Sigmoid colon (tissue), 7 donors: ENCODE measurements at regions of chr13 and their contacts with region 1.

Region 1: DNA sequence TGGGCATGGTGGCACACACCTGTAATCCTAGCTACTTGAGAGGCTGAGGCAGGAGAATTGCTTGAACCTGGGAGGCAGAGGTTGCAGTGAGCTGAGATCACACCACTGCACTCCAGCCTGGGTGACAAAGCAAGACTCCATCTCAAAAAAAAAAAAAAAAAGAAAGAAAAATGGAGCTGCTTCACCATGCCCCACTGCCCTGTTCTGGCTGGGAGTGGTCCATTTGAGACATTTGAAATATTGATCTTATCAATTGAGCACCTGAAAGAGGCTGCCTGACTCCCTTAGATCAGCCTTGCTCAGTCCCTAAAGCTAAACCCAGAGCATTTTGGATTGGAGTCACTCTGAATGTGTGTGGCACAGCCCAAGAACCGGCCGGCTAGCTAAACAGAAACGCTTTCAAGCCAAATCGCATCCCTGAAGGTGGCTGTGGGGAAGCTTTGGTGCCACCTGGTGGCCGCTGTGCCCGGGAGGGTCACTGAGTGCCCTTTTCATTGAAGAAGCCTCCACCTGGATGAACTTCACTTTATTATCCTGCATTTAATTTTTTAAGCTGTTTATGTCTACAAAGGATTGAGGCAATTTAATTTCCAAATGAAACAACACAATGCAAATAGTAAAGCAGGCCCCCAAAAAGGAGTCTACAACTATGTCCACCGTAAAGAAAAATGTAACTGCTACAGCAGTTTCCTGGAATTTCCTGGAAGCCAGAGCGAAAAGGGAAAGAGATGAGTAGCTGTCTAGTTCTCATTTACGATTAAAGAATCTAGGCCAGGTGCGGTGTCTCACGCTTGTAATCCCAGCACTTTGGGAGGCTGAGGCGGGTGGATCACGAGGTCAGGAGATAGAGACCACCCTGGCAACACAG is 53.1 kb upstream of the SERPINE3 start:
- DNase-seq: peak; percentile 87
- H3K4me3 ChIP-seq: no peak overlapping the region
- H3K27ac ChIP-seq: no peak overlapping the region
- H3K4me1 ChIP-seq: peaks cover 0 to 25% (median 11%) of the 10 kb centered on the region in 4 donors
- H3K27me3 ChIP-seq: no peaks in the 10 kb centered on the region
- CTCF ChIP-seq: peak; percentile 82 to 93 (median 88)
- EP300 ChIP-seq: no peak
- POLR2A ChIP-seq: no peak

Region 2: GRCh38 chr13:51125498-51126226 is 160.7 kb before region 1 on chr13:
- intact Hi-C with region 1: loop called (anchors 2 kb)
- DNase-seq: peak; percentile 72
- H3K4me3 ChIP-seq: no peak overlapping the region
- H3K27ac ChIP-seq: no peak overlapping the region
- H3K4me1 ChIP-seq: no peaks in the 10 kb centered on the region
- H3K27me3 ChIP-seq: no peaks in the 10 kb centered on the region
- CTCF ChIP-seq: peak; percentile 52 to 61 (median 55)
- EP300 ChIP-seq: no peak
- POLR2A ChIP-seq: no peak

Region 3: GRCh38 chr13:51148952-51149573 is 137.3 kb before region 1 on chr13:
- intact Hi-C with region 1: loop called (anchors 1 kb)
- DNase-seq: no peak
- H3K4me3 ChIP-seq: no peak overlapping the region
- H3K27ac ChIP-seq: peak overlapping the region in 1 of 4 donors; percentile 32
- H3K4me1 ChIP-seq: peaks cover 0 to 3% (median 0%) of the 10 kb centered on the region in 4 donors
- H3K27me3 ChIP-seq: no peaks in the 10 kb centered on the region
- CTCF ChIP-seq: peak; percentile 20 to 56 (median 46)
- EP300 ChIP-seq: no peak
- POLR2A ChIP-seq: no peak

Region 4: GRCh38 chr13:51832471-51833152 is 546.2 kb after region 1 on chr13:
- intact Hi-C with region 1: no loop called
- DNase-seq: no peak
- H3K4me3 ChIP-seq: no peak overlapping the region
- H3K27ac ChIP-seq: no peak overlapping the region
- H3K4me1 ChIP-seq: peaks cover 0 to 5% (median 3%) of the 10 kb centered on the region in 4 donors
- H3K27me3 ChIP-seq: no peaks in the 10 kb centered on the region
- CTCF ChIP-seq: peak; percentile 38 to 54 (median 44)
- EP300 ChIP-seq: no peak
- POLR2A ChIP-seq: no peak